ENCODE measurements at regions of chr21 and their contacts with region 1.

Region 1: DNA sequence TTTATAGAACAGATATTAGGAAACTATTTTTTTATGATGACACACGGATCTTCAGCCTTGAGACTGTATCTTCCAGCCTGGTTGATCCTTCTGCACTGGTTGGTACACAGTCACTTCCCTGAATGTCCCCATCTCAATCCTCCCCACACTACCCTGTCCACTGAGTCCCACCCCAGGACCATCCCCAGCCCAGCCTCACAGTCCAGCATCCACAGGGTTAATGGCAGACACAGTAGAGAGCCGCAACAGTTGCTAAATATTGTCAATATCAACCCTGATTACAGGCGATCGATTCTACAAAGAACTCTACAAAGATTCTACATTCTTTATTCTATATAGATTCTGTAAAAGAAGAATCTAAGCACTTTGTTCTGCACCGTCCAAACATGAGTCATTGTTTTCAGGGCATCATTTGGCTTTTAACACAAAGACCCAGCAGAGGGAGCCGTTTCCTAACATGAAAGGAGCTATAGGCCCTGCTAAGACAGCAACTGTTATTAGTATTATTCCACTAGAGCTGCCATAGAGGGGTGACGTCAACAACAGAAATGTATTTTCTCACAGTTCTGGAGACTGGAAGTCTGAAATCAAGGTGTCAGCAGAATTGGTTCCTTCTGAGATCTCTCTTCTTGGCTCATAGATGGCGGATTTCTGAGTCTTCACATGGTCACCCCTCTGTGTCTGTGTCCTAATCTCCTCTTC is 30.1 kb upstream of the IFNAR2 start:
- DNase-seq: peak; percentile 88
- ATAC-seq: peak; percentile 80
- H3K4me3 ChIP-seq: no peak overlapping the region
- H3K27ac ChIP-seq: no peak overlapping the region
- H3K4me1 ChIP-seq: peaks cover 6 to 30% of the 10 kb centered on the region in 2 experiments
- H3K27me3 ChIP-seq: no peaks in the 10 kb centered on the region
- CTCF ChIP-seq: peak; percentile 71 to 86 (median 79)
- POLR2A ChIP-seq: no peak
- RAD21 ChIP-seq: peak; percentile 94

Region 2: DNA sequence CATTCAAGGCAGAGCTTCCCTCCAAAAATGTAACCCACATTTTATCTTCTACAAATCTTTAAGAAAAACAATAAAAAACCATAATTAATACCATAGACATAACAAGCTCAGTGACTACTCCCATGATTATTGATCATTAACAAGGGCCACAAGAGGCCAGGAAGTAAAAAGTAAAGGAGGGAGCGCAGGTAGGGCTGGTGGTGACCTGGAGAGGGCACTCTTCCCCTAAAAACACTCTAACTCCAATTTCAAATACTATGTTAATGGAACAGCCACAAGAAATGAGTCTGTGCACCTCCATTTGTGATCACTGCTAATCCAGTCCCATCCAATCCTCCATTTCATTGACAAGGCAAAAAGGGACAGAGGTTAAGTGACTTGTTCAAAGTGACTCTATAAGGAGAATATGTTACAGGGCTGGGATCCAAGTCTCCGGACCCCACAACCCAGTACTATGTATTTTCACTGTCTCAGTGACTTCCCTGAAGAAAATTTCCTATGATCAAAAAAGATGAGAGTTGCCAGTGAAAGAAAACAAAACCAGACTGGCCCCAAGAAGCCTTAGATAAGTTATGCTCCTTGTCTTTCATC is 546.3 kb before region 1 on chr21:
- CTCF ChIA-PET with region 1: no interaction called
- POLR2A ChIA-PET with region 1: no interaction called
- RAD21 ChIA-PET with region 1: no interaction called
- intact Hi-C with region 1: loop called (anchors 2 kb)
- DNase-seq: peak; percentile 15
- ATAC-seq: peak; percentile 86
- H3K4me3 ChIP-seq: no peak overlapping the region
- H3K27ac ChIP-seq: no peak overlapping the region
- H3K4me1 ChIP-seq: no peaks in the 10 kb centered on the region
- H3K27me3 ChIP-seq: no peaks in the 10 kb centered on the region
- CTCF ChIP-seq: peak; percentile 36 to 84 (median 78); a peak in 4 of 6 replicates
- POLR2A ChIP-seq: no peak
- RAD21 ChIP-seq: peak; percentile 69

Region 3: GRCh38 chr21:32921632-32922230 is 277.9 kb before region 1 on chr21:
- CTCF ChIA-PET with region 1: interaction called, 4 read pairs
- POLR2A ChIA-PET with region 1: no interaction called
- RAD21 ChIA-PET with region 1: no interaction called
- intact Hi-C with region 1: loop called (anchors 2 kb)
- DNase-seq: peak; percentile 29
- ATAC-seq: peak; percentile 82
- H3K4me3 ChIP-seq: no peak overlapping the region
- H3K27ac ChIP-seq: no peak overlapping the region
- H3K4me1 ChIP-seq: no peaks in the 10 kb centered on the region
- H3K27me3 ChIP-seq: 0 out of 2 replicates have a peak, but pooled peaks cover 13% of the 10 kb centered on the region
- CTCF ChIP-seq: peak; percentile 15 to 82 (median 82); a peak in 5 of 6 replicates
- POLR2A ChIP-seq: no peak
- RAD21 ChIP-seq: 0 out of 2 replicates have a peak, but pooled peaks have one; percentile 20

Region 4: DNA sequence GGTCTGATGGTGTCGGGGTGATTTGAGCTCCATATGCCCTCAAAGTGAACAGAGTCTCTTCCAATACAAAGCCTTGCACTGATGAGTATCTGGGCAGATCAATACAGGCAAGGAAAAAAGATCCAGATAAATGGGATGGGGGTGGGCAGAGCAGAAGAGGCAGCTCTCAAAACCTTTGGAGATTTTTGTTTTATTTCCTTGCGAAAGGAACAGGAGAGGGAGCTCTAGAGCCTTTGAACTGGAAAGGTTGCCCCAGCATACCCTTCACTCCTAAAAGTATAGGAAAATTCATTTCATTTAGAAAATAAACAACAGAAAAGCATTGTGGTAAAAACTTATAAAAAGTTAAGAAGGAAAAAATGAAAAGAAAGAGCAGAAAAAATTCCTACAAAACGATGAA is 205.4 kb before region 1 on chr21:
- CTCF ChIA-PET with region 1: interaction called, 20 read pairs
- POLR2A ChIA-PET with region 1: no interaction called
- RAD21 ChIA-PET with region 1: interaction called in 1 of 2 experiments, 3 read pairs
- intact Hi-C with region 1: loop called (anchors 1 kb)
- DNase-seq: no peak
- ATAC-seq: peak; percentile 77
- H3K4me3 ChIP-seq: no peak overlapping the region
- H3K27ac ChIP-seq: no peak overlapping the region
- H3K4me1 ChIP-seq: no peaks in the 10 kb centered on the region
- H3K27me3 ChIP-seq: peaks cover 34% of the 10 kb centered on the region
- CTCF ChIP-seq: peak; percentile 47 to 69 (median 58); a peak in 4 of 6 replicates
- POLR2A ChIP-seq: no peak
- RAD21 ChIP-seq: peak; percentile 65

Region 5: GRCh38 chr21:33015756-33016155 is 183.9 kb before region 1 on chr21:
- CTCF ChIA-PET with region 1: no interaction called
- POLR2A ChIA-PET with region 1: no interaction called
- RAD21 ChIA-PET with region 1: no interaction called
- intact Hi-C with region 1: no loop called
- DNase-seq: no peak
- ATAC-seq: no peak
- H3K4me3 ChIP-seq: no peak overlapping the region
- H3K27ac ChIP-seq: no peak overlapping the region
- H3K4me1 ChIP-seq: peaks cover 0 to 7% of the 10 kb centered on the region in 2 experiments; a peak in 2 of 4 replicates
- H3K27me3 ChIP-seq: no peaks in the 10 kb centered on the region; the same call in 1 of the 2 replicates
- CTCF ChIP-seq: no peak
- POLR2A ChIP-seq: no peak
- RAD21 ChIP-seq: no peak

Region 6: GRCh38 chr21:33360881-33361602 is 161.4 kb after region 1 on chr21:
- CTCF ChIA-PET with region 1: interaction called, 18 read pairs
- POLR2A ChIA-PET with region 1: no interaction called
- RAD21 ChIA-PET with region 1: interaction called, 5 to 6 read pairs
- intact Hi-C with region 1: no loop called
- DNase-seq: no peak
- ATAC-seq: peak; percentile 98
- H3K4me3 ChIP-seq: no peak overlapping the region
- H3K27ac ChIP-seq: no peak overlapping the region
- H3K4me1 ChIP-seq: peaks cover 10 to 15% of the 10 kb centered on the region in 2 experiments
- H3K27me3 ChIP-seq: no peaks in the 10 kb centered on the region
- CTCF ChIP-seq: peak in 2 of 3 experiments; percentile 91 to 95; a peak in 5 of 6 replicates
- POLR2A ChIP-seq: no peak
- RAD21 ChIP-seq: peak; percentile 46

Region 7: DNA sequence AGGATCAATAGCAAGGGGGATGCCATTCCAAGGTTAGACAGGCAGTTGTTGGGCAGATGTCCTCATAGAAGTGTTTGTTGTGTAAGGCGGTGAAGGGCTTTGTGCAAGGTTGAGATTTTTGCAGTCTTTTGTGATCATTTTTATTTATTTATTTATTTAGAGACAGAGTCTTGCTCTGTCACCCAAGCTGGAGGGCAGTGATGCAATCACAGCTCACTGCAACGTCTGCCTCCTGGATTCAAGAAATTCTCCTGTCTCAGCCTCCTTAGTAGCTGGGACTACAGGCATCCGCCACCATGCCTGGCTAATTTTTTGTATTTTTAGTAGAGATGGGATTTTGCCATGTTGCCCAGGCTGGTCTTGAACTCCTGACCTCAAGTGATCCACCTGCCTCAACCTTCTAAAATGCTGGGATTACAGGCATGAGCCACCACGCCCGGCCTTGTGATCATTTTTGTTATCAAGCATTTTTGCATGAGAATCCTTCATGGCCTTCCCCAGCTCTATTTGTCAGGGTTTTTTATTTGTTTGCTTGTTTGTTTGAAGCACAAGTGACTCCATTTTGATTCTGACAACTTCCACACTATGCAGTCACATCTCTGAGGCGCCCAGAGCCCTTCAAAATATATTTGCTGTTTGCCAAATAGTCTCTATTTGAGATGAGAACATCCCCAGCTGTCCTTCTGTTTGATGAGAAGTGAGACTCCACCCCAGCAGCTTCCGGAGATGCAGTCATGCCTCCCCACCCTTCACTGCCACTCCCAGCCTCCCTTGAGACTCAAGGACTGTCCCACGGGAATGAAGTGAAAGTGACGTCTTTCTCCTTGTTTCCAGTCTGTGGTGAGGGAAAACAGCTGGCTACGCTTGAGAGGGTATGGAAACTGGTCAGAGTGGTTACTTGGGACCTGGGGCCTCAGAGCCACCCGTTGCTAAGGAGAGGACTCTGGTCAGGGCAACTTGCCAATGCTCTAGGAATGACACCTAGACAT is 242.1 kb after region 1 on chr21:
- CTCF ChIA-PET with region 1: interaction called, 66 read pairs
- POLR2A ChIA-PET with region 1: interaction called, 3 read pairs
- RAD21 ChIA-PET with region 1: interaction called, 3 to 8 read pairs
- intact Hi-C with region 1: loop called (anchors 1 kb)
- DNase-seq: no peak
- ATAC-seq: no peak
- H3K4me3 ChIP-seq: no peak overlapping the region
- H3K27ac ChIP-seq: no peak overlapping the region
- H3K4me1 ChIP-seq: peaks cover 3 to 5% of the 10 kb centered on the region in 2 experiments; a peak in 2 of 4 replicates
- H3K27me3 ChIP-seq: no peaks in the 10 kb centered on the region
- CTCF ChIP-seq: no peak
- POLR2A ChIP-seq: no peak
- RAD21 ChIP-seq: no peak